Activated T-helper 1 cell treated with anti-CD3 and anti-CD28 coated beads, Interleukin-12 subunit alpha, Interleukin-12 subunit beta, Interleukin-2, Interleukin-4 antibody, amounts not matched to agents 30 ng/mL and 10 ng/mL and 1 ng/mL, durations not matched to agents 14 hours and 24 hours and 36 hours (primary cell): ENCODE measurements at regions of chr16 and their contacts with region 1.

Region 1: DNA sequence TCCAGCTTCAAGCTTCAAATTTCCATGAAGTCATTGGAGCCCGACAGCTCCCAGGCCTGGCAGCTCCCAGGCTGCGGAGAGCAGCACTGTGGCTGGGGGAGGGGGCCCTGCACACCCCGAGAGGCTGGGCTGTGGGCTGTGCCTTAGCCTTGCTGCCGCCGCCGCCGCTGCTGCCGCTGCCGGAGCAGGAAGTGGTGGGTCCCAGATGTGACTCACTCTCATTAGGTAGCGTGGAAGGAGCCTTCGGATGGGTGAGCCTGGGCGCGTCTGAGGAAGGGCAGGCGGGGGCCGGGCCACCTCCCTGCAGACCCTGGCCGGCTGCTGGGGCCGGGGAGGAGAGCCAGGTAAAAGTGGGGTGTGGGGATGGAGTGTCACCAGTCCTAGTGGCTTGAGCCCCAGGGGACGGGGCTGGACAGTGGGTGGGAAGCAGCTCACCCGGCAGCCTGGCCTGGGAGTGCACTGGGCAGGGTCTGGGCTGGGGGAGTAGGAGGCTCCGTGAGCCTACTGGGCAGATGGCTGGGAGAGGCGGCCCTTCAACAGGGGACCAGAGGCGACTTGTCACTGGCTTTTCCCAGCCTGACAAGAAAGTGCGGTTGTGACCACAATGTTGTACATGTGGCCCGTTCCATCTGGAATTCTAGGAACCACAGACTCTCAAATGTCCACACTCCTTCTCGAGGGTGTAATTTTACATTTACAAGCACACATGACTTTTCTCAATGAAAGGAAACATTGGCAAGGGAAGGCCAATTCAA is at the start of gene ADCY7:
- DNase-seq: peak; percentile 79
- H3K4me3 Mint-ChIP-seq: peak within 1 kb of the TSS; percentile 86
- H3K27ac Mint-ChIP-seq: peak within 1 kb of the TSS; percentile 96
- H3K4me1 Mint-ChIP-seq: peaks cover 86% of the 10 kb centered on the region
- H3K27me3 Mint-ChIP-seq: no peaks in the 10 kb centered on the region
- total RNA-seq, gene ADCY7: 78.0 and 81.9 TPM in 2 replicates

Region 2: GRCh38 chr16:49876716-49877129 is 389.8 kb before region 1 on chr16:
- intact Hi-C with region 1: no loop called
- DNase-seq: peak; percentile 13
- H3K4me3 Mint-ChIP-seq: no peak overlapping the region
- H3K27ac Mint-ChIP-seq: no peak overlapping the region
- H3K4me1 Mint-ChIP-seq: no peaks in the 10 kb centered on the region
- H3K27me3 Mint-ChIP-seq: peaks cover 21% of the 10 kb centered on the region

Region 3: GRCh38 chr16:49951574-49952195 is 314.8 kb before region 1 on chr16:
- intact Hi-C with region 1: no loop called
- DNase-seq: no peak
- H3K4me3 Mint-ChIP-seq: no peak overlapping the region
- H3K27ac Mint-ChIP-seq: no peak overlapping the region
- H3K4me1 Mint-ChIP-seq: no peaks in the 10 kb centered on the region
- H3K27me3 Mint-ChIP-seq: peaks cover 3% of the 10 kb centered on the region

Region 4: GRCh38 chr16:50065624-50066481 is 200.7 kb before region 1 on chr16 and contains the start of gene HEATR3:
- intact Hi-C with region 1: loop called (anchors 5 kb)
- DNase-seq: peak; percentile 93
- H3K4me3 Mint-ChIP-seq: peak within 1 kb of the TSS; percentile 85
- H3K27ac Mint-ChIP-seq: peak within 1 kb of the TSS; percentile 90
- H3K4me1 Mint-ChIP-seq: peaks cover 39% of the 10 kb centered on the region
- H3K27me3 Mint-ChIP-seq: no peaks in the 10 kb centered on the region
- total RNA-seq, gene HEATR3: 29.1 and 30.7 TPM in 2 replicates

Region 5: GRCh38 chr16:50166511-50167500 is 99.7 kb before region 1 on chr16:
- intact Hi-C with region 1: no loop called
- DNase-seq: no peak
- H3K4me3 Mint-ChIP-seq: peak overlapping the region; percentile 51
- H3K27ac Mint-ChIP-seq: peak overlapping the region; percentile 78
- H3K4me1 Mint-ChIP-seq: peaks cover 35% of the 10 kb centered on the region
- H3K27me3 Mint-ChIP-seq: no peaks in the 10 kb centered on the region

Region 6: DNA sequence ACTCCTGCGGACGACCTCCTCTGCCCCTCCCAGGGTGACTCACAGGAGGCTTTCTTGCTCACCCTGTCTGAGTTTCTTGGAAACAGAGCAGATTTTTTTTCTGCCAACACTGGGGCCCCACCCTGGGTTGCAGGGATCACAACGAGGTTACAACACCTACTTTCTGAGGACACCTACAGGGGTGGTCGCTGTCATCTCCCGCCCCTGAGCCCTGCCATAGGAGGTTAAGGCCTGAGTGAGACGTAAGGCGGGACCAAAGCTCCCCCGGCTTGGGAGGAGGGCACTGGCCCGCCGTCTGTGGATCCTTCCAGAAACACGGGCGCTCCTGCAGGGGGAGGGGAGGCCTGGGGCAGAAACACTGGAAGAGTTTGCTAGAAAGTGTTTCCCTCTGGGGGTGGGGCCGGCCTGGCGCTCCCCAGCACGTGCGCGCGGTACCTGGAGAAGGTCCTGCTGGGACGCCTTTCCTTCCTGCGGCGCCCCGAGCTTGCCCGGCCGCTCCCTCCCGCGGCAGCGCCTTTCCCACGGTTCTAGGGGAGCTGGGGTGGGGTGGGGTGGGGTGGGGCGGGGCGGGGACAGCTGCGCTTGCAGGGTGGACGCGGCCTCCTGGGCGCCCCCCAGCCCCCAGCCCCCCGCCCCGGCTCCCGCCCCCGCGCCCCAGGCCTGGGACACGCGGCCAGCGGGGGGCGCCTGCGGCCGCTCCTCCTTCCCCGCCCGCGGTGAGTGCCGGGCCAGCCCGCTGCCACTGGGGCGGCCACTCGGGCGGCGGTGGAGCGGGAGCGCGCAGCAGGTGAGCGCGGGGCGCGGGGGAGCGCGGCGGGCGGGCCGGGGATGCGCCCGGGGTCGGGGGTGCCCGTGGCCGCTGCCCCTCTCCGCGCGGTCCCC is 20.9 kb before region 1 on chr16:
- intact Hi-C with region 1: loop called (anchors 1 kb)
- DNase-seq: peak; percentile 34
- H3K4me3 Mint-ChIP-seq: peak overlapping the region; percentile 83
- H3K27ac Mint-ChIP-seq: peak overlapping the region; percentile 71
- H3K4me1 Mint-ChIP-seq: peaks cover 16% of the 10 kb centered on the region
- H3K27me3 Mint-ChIP-seq: peaks cover 6% of the 10 kb centered on the region

Region 7: DNA sequence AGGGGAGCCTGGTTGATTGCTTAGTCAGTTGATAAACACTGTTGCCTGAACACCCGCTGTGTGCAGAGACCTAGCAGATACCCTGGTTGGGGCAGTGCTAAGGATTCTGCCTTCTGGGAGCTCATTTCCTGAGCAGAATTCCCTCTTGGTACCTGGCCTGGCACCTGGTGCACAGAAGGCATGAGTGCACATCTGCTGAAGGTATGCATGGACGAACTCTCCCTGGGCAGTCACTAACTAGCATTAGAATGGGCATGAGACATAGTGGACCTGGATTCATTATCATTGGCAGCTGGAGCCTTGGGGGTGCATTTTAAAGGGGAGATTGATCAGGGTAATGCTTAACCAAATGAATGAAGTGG is 13.0 kb after region 1 on chr16:
- intact Hi-C with region 1: loop called (anchors 1 kb)
- DNase-seq: no peak
- H3K4me3 Mint-ChIP-seq: peak overlapping the region; percentile 0
- H3K27ac Mint-ChIP-seq: no peak overlapping the region
- H3K4me1 Mint-ChIP-seq: peaks cover 86% of the 10 kb centered on the region
- H3K27me3 Mint-ChIP-seq: no peaks in the 10 kb centered on the region

Region 8: GRCh38 chr16:50326949-50327402 is 60.5 kb after region 1 on chr16:
- intact Hi-C with region 1: loop called (anchors 1 kb)
- DNase-seq: peak; percentile 68
- H3K4me3 Mint-ChIP-seq: no peak overlapping the region
- H3K27ac Mint-ChIP-seq: no peak overlapping the region
- H3K4me1 Mint-ChIP-seq: peaks cover 45% of the 10 kb centered on the region
- H3K27me3 Mint-ChIP-seq: no peaks in the 10 kb centered on the region

Region 9: GRCh38 chr16:50335196-50335958 is 68.9 kb after region 1 on chr16:
- intact Hi-C with region 1: loop called (anchors 1 kb)
- DNase-seq: no peak
- H3K4me3 Mint-ChIP-seq: peak overlapping the region; percentile 37
- H3K27ac Mint-ChIP-seq: peak overlapping the region; percentile 87
- H3K4me1 Mint-ChIP-seq: peaks cover 48% of the 10 kb centered on the region
- H3K27me3 Mint-ChIP-seq: no peaks in the 10 kb centered on the region

Region 10: GRCh38 chr16:50681021-50681885 is 414.7 kb after region 1 on chr16 and contains the start of gene SNX20:
- intact Hi-C with region 1: loop called (anchors 5 kb)
- DNase-seq: peak; percentile 41
- H3K4me3 Mint-ChIP-seq: peak within 1 kb of the TSS; percentile 82
- H3K27ac Mint-ChIP-seq: peak within 1 kb of the TSS; percentile 85
- H3K4me1 Mint-ChIP-seq: peaks cover 90% of the 10 kb centered on the region
- H3K27me3 Mint-ChIP-seq: no peaks in the 10 kb centered on the region
- total RNA-seq, gene SNX20: 34.3 TPM in 2 replicates